ENCODE measurements at regions of chr13 and their contacts with region 1.

Region 1: DNA sequence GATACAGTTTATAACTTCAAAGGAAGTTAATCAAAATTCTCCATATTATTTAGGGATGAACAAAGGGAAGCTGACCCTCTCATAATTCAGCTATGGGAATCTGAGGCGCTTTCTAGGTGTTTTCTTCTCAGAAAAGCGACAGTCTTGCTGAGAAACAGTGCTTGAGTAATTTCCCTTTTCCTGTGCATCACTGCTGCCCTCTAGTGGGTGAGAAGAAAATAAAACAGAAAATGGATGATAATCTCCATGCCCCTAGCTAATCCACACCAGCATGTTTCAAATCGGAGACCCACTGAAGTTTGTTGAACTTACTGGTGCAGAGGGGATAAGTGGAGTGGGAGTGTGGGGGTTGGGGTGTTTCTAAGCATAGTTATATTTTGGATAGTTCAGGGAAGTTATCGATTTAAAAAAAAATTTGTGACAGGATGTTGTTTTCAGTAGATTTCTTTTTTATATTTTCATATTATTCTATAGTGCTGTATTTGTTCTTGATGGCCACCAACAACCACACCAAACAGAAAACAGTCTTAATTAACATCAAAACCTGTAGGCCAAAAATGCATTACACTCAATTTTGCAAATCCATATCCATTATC is 21.4 kb downstream of the LCP1 start:
- DNase-seq: no peak
- ATAC-seq: peak; percentile 74
- H3K4me3 Mint-ChIP-seq: no peak overlapping the region
- H3K27ac Mint-ChIP-seq: no peak overlapping the region
- H3K4me1 Mint-ChIP-seq: no peaks in the 10 kb centered on the region
- H3K27me3 Mint-ChIP-seq: no peaks in the 10 kb centered on the region
- CTCF ChIP-seq: peak; percentile 51; the same call in 1 of the 2 replicates

Region 2: GRCh38 chr13:46126552-46127357 is 33.8 kb before region 1 on chr13:
- CTCF ChIA-PET with region 1: interaction called, 12 read pairs
- POLR2A ChIA-PET with region 1: no interaction called
- DNase-seq: peak; percentile 83
- ATAC-seq: peak; percentile 98
- H3K4me3 Mint-ChIP-seq: no peak overlapping the region
- H3K27ac Mint-ChIP-seq: peak overlapping the region; percentile 32; the same call in 1 of the 2 replicates
- H3K4me1 Mint-ChIP-seq: 0 out of 2 replicates have a peak, but pooled peaks cover 1% of the 10 kb centered on the region
- H3K27me3 Mint-ChIP-seq: no peaks in the 10 kb centered on the region
- CTCF ChIP-seq: peak; percentile 61; the same call in 1 of the 2 replicates

Region 3: DNA sequence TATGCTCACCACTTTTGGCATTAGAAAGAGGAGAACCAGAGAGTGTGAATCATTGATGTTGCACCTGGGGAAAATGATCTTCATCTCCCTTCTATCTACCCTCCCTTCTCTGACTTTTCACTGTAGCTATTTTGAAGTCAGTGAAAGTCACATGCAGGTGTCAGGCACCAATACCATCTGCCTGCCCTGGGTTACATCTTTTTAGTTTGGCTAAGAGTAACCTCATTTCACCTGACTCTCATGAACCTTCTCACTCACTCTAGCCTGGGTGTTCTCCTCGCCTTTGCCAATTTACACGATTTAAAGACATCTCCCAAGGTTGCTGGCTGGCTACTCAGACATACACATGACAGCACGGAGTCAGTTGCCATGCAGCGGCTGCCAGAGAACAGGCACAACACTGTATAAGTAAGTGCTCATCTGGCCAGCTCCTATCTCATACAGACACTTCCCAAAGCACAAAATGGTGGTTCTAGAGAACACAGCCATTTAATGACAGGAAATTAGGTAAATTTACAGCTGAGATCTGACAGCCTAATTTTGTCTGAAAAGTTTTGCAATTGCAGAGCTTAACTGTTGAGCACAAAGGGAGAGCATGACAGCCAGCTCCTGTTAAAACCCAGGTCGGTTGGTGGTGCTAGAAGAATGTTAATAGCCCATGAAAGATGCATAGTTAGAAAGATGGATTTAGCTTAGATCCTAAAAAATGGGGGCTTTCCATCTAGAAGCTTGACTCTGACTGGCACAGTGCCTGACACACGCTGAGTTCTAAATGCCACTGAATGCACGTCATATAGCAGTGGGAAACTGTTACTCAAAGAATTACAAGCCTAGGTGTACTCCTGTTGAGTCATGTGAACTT is 11.1 kb before region 1 on chr13:
- CTCF ChIA-PET with region 1: interaction called, 19 read pairs
- POLR2A ChIA-PET with region 1: no interaction called
- DNase-seq: no peak
- ATAC-seq: no peak; the same call in 1 of the 2 replicates
- H3K4me3 Mint-ChIP-seq: no peak overlapping the region
- H3K27ac Mint-ChIP-seq: no peak overlapping the region
- H3K4me1 Mint-ChIP-seq: peaks cover 40% of the 10 kb centered on the region
- H3K27me3 Mint-ChIP-seq: no peaks in the 10 kb centered on the region; the same call in 1 of the 2 replicates
- CTCF ChIP-seq: no peak

Region 4: GRCh38 chr13:46172531-46172991 is 12.0 kb after region 1 on chr13:
- CTCF ChIA-PET with region 1: interaction called, 19 read pairs
- POLR2A ChIA-PET with region 1: no interaction called
- DNase-seq: no peak
- ATAC-seq: no peak
- H3K4me3 Mint-ChIP-seq: no peak overlapping the region
- H3K27ac Mint-ChIP-seq: no peak overlapping the region
- H3K4me1 Mint-ChIP-seq: peaks cover 17% of the 10 kb centered on the region
- H3K27me3 Mint-ChIP-seq: peaks cover 17% of the 10 kb centered on the region
- CTCF ChIP-seq: no peak

Region 5: GRCh38 chr13:46321494-46322225 is 161.1 kb after region 1 on chr13:
- CTCF ChIA-PET with region 1: interaction called, 15 read pairs
- POLR2A ChIA-PET with region 1: no interaction called
- DNase-seq: peak; percentile 55
- ATAC-seq: peak; percentile 86
- H3K4me3 Mint-ChIP-seq: no peak overlapping the region
- H3K27ac Mint-ChIP-seq: no peak overlapping the region; the same call in 1 of the 2 replicates
- H3K4me1 Mint-ChIP-seq: peaks cover 7% of the 10 kb centered on the region
- H3K27me3 Mint-ChIP-seq: peaks cover 41% of the 10 kb centered on the region
- CTCF ChIP-seq: peak; percentile 43; the same call in 1 of the 2 replicates

Measured in WTC11 (cell line).